ENCODE measurements at regions of chr15 and their contacts with region 1.

Region 1: GRCh38 chr15:78108299-78109084 is 16.1 kb downstream of the SH2D7 start:
- DNase-seq: peak; percentile 82 to 85 (median 82)
- H3K4me3 ChIP-seq: no peak overlapping the region
- H3K4me3 Mint-ChIP-seq: no peak overlapping the region
- H3K27ac ChIP-seq: no peak overlapping the region
- H3K27ac Mint-ChIP-seq: peak overlapping the region in 3 of 7 donors; percentile 24 to 62 (median 46)
- H3K4me1 ChIP-seq: peaks cover 34% of the 10 kb centered on the region
- H3K4me1 Mint-ChIP-seq: peaks cover 27 to 41% (median 31%) of the 10 kb centered on the region in 4 donors
- H3K27me3 ChIP-seq: no peaks in the 10 kb centered on the region
- H3K27me3 Mint-ChIP-seq: no peaks in the 10 kb centered on the region

Region 2: GRCh38 chr15:77966540-77967290 is 141.8 kb before region 1 on chr15:
- CTCF ChIA-PET with region 1: interaction called, 236 read pairs
- POLR2A ChIA-PET with region 1: interaction called, 9 read pairs
- intact Hi-C with region 1: no loop called
- DNase-seq: peak in 4 of 5 donors; percentile 39 to 40 (median 39)
- H3K4me3 ChIP-seq: no peak overlapping the region
- H3K4me3 Mint-ChIP-seq: no peak overlapping the region
- H3K27ac ChIP-seq: no peak overlapping the region
- H3K27ac Mint-ChIP-seq: no peak overlapping the region
- H3K4me1 ChIP-seq: no peaks in the 10 kb centered on the region
- H3K4me1 Mint-ChIP-seq: peaks cover 0 to 4% (median 0%) of the 10 kb centered on the region in 4 donors
- H3K27me3 ChIP-seq: no peaks in the 10 kb centered on the region
- H3K27me3 Mint-ChIP-seq: no peaks in the 10 kb centered on the region

Region 3: DNA sequence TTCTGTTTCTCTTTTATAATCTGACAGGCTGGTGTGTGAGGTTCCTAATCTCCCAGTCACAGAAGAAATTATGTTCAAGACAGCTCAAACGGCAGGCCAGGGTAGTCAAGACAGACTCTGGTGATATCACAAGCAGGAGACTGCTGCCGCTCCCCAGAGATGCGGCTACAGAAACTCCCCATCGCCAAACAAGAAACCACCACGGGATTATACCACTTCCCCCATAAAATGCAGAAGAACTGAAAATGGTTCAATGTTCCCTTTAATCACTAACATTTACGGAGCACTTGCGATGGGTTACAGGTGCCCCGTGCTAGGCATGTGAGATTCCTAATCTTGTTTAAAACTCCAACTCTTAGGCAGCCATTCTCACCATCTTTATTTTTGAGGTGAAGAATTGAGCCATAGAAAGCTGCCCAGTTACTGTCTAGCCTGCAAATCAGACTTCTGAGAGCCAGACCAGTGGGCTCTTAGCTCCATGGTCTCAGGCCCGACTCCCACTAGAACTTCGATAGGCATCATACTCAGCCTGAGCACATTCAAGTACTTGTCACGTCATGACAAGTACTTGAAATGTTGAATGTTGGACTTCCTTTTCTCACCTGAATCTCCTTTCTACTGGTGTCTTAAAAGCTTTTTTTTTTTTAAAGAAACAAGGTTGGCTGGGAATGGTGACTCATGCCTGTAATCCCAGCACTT is 89.4 kb before region 1 on chr15:
- CTCF ChIA-PET with region 1: interaction called, 19 read pairs
- POLR2A ChIA-PET with region 1: no interaction called
- intact Hi-C with region 1: no loop called
- DNase-seq: peak in 2 of 5 donors; percentile 25 to 45
- H3K4me3 ChIP-seq: no peak overlapping the region
- H3K4me3 Mint-ChIP-seq: peak overlapping the region in 2 of 8 donors; percentile 48 to 51
- H3K27ac ChIP-seq: no peak overlapping the region
- H3K27ac Mint-ChIP-seq: peak overlapping the region in 6 of 7 donors; percentile 59 to 82 (median 78)
- H3K4me1 ChIP-seq: peaks cover 10% of the 10 kb centered on the region
- H3K4me1 Mint-ChIP-seq: peaks cover 22 to 40% (median 29%) of the 10 kb centered on the region in 4 donors
- H3K27me3 ChIP-seq: no peaks in the 10 kb centered on the region
- H3K27me3 Mint-ChIP-seq: no peaks in the 10 kb centered on the region

Region 4: DNA sequence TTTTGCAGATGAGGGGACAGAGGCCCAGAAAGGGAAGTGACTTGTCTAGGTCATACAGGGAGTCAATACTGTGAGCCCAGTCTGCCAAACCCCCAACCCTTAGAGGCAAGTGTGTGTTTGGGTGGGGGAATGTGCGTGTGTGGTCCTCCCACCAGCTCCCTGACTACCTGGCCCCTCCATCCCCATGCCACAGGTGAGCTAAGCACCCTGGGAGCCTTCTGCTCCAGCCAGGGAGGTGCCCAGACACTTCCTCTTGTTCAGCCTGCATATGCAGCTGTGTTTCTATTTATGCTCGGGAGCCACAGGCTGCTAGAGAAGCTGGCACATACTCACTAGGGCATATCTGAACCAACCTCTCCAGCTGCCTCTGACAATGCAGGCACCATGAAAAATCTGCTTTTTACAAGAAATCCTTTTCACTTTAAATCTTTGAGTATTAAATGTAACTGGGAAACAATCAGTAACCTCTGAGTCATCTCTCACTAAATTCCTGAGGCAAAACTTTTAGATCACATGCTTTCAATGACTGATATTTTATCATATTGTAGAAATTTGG is 51.7 kb before region 1 on chr15:
- CTCF ChIA-PET with region 1: interaction called, 21 read pairs
- POLR2A ChIA-PET with region 1: interaction called, 7 read pairs
- intact Hi-C with region 1: no loop called
- DNase-seq: peak in 2 of 5 donors; percentile 32 to 54
- H3K4me3 ChIP-seq: peak overlapping the region in 1 of 2 donors; percentile 26
- H3K4me3 Mint-ChIP-seq: peak overlapping the region; percentile 31 to 90 (median 82)
- H3K27ac ChIP-seq: peak overlapping the region; percentile 64
- H3K27ac Mint-ChIP-seq: peak overlapping the region; percentile 86 to 98 (median 93)
- H3K4me1 ChIP-seq: peaks cover 98% of the 10 kb centered on the region
- H3K4me1 Mint-ChIP-seq: peaks cover 69 to 91% (median 81%) of the 10 kb centered on the region in 4 donors
- H3K27me3 ChIP-seq: no peaks in the 10 kb centered on the region
- H3K27me3 Mint-ChIP-seq: no peaks in the 10 kb centered on the region

Region 5: GRCh38 chr15:78085928-78086327 is 22.6 kb before region 1 on chr15:
- CTCF ChIA-PET with region 1: interaction called, 13 read pairs
- POLR2A ChIA-PET with region 1: interaction called, 4 read pairs
- intact Hi-C with region 1: no loop called
- DNase-seq: no peak
- H3K4me3 ChIP-seq: no peak overlapping the region
- H3K4me3 Mint-ChIP-seq: no peak overlapping the region
- H3K27ac ChIP-seq: no peak overlapping the region
- H3K27ac Mint-ChIP-seq: no peak overlapping the region
- H3K4me1 ChIP-seq: no peaks in the 10 kb centered on the region
- H3K4me1 Mint-ChIP-seq: no peaks in the 10 kb centered on the region
- H3K27me3 ChIP-seq: no peaks in the 10 kb centered on the region
- H3K27me3 Mint-ChIP-seq: no peaks in the 10 kb centered on the region

Region 6: DNA sequence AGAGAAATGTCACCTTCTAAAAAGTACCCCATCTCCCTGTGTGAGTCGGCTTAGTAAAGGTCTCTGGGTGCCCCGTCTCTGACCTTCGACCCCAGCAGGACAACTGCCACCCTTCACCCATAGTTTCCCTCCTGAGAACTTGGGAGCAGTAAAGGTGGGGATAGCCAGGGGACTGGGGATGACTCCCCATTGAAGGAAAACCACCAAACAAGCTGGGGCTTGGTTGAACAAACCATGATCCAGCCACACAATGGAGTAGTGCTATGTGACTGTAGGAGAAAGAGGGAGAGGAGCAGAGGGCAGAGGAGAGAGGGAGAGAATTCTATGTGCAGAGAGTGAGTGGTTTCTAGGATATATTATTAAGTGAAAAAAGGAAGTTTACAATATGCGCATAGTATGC is 74.3 kb after region 1 on chr15:
- CTCF ChIA-PET with region 1: no interaction called
- POLR2A ChIA-PET with region 1: no interaction called
- intact Hi-C with region 1: no loop called
- DNase-seq: no peak
- H3K4me3 ChIP-seq: no peak overlapping the region
- H3K4me3 Mint-ChIP-seq: no peak overlapping the region
- H3K27ac ChIP-seq: no peak overlapping the region
- H3K27ac Mint-ChIP-seq: no peak overlapping the region
- H3K4me1 ChIP-seq: no peaks in the 10 kb centered on the region
- H3K4me1 Mint-ChIP-seq: no peaks in the 10 kb centered on the region
- H3K27me3 ChIP-seq: peaks cover 5% of the 10 kb centered on the region
- H3K27me3 Mint-ChIP-seq: peaks cover 3% of the 10 kb centered on the region in 2 donors

Region 7: DNA sequence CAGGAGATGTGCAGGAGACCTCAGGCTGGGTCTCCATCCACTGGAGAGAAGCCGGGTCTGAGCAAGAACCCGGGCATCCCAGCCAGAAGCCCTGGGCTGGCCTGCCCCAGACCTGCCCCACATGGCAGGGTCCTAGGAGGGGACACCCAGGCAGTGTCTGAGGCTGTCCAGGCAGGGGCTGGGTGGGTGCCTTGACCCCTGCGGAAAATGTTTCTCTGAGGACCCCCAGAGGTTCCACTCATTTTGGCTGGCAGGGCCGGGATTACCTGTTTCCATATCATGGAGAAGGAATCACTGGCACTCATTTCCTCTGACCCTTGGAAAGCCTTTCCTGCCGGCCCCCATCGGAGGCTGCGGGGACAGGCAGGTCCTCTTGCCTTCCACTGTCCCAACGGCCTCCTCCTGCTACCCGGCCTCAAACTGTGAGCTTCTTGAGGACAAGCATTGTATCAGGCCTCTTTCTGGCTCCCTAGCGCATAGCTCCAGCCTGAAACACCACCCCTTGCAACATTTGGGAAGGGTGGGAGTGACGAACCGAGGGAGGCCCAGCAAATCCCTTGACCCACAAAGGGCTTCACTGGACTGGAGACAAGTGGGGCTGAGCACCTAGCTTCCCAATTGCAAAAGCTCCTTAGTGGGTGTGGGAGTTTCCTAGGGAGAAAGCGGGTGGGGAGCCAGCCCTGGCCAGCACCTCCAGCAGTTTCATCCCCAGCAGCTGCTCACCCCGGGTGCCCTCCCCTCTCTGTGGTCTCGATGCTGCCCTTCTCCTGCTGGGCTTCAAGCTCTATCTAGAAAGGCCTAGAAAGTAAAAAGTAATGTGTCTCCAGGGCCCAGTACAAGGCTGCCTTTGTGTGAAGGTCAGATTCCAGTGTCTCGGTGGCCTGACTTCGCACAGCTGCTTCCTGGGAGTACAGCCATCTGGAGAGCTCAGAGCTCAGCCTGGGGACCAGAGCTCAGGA is 96.1 kb after region 1 on chr15:
- CTCF ChIA-PET with region 1: interaction called, 11 read pairs
- POLR2A ChIA-PET with region 1: no interaction called
- intact Hi-C with region 1: no loop called
- DNase-seq: no peak
- H3K4me3 ChIP-seq: no peak overlapping the region
- H3K4me3 Mint-ChIP-seq: no peak overlapping the region
- H3K27ac ChIP-seq: no peak overlapping the region
- H3K27ac Mint-ChIP-seq: no peak overlapping the region
- H3K4me1 ChIP-seq: no peaks in the 10 kb centered on the region
- H3K4me1 Mint-ChIP-seq: no peaks in the 10 kb centered on the region
- H3K27me3 ChIP-seq: no peaks in the 10 kb centered on the region
- H3K27me3 Mint-ChIP-seq: no peaks in the 10 kb centered on the region

Region 8: DNA sequence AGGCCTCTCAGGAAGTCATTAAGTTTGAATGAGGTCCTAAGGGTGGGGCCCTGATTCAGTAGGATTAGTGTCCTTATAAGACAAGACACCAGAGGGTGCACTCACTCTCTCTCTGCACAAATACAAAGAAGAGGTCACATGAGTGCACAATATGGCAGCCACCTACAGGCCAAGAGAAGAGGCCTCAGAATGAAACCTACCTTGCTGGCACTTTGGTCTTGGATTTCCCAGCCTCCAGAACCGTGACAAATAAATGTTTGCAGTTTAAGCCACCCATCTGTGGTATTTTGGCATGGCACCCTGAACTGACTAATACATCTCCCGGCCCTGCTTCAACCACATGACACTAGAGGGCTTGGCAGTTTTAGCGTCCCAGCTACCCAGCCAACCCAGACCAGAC is 606.4 kb after region 1 on chr15:
- CTCF ChIA-PET with region 1: no interaction called
- POLR2A ChIA-PET with region 1: no interaction called
- intact Hi-C with region 1: loop called (anchors 5 kb)
- DNase-seq: no peak
- H3K4me3 ChIP-seq: no peak overlapping the region
- H3K4me3 Mint-ChIP-seq: no peak overlapping the region
- H3K27ac ChIP-seq: no peak overlapping the region
- H3K27ac Mint-ChIP-seq: no peak overlapping the region
- H3K4me1 ChIP-seq: no peaks in the 10 kb centered on the region
- H3K4me1 Mint-ChIP-seq: no peaks in the 10 kb centered on the region
- H3K27me3 ChIP-seq: no peaks in the 10 kb centered on the region
- H3K27me3 Mint-ChIP-seq: peaks cover 15 to 23% of the 10 kb centered on the region in 2 donors